H1 (cell line): ENCODE measurements at regions of chr11 and their contacts with region 1.

Region 1: DNA sequence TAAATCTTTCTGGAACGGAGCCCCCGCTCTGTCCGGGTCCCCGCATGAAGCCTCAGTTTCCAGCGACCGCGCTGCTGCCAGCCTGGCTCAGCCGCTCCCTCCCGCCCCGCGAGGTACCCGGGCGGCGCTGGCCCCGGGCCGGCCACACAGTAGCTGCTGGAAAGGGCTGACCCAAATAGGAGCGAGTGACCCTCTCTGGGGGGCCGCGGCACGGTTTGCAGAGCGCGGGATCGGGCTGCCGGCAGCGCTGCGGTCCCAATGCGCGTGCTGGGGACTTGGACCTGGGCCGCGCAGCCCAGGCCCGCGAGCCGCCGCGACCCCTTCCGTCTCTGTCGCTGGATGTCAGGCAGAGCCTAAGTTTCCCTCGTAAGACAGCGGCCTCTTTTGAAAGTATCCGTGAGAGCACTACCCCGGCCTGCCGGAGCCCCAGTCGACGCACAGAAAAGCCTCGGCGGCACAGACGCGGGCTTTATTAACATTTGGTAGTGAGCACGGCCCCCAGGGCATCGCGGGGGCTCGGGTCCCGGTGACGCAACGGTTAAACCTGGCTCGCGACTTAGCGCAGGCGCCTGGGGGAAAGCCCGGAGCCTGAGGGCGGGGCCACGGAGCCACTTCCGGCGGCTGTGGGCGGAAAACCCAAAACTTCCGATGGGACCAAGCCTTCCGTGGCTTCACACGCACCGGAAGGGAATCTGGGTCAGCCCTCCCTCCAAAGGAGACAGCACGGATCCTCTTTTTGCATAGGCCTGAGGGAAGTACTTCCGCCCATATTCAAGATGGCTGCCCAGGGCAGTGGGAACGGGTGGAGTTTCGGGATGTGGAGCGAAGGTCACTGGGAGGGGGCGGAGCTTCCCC is 14.9 kb downstream of the BAD start:
- DNase-seq: peak; percentile 95 to 98
- H3K4me3 ChIP-seq: peak overlapping the region; percentile 70 to 84 (median 82)
- H3K27ac ChIP-seq: peak overlapping the region; percentile 88
- H3K4me1 ChIP-seq: peaks cover 0 to 11% (median 5%) of the 10 kb centered on the region in 4 experiments; a peak in 5 of 7 replicates
- H3K27me3 ChIP-seq: no peaks in the 10 kb centered on the region
- CTCF ChIP-seq: no peak; a peak in 2 of 4 replicates
- EP300 ChIP-seq: 0 out of 3 replicates have a peak, but pooled peaks of 1 of the 2 experiments have one; percentile 27
- POLR2A ChIP-seq: no peak; a peak in 1 of 3 replicates
- RAD21 ChIP-seq: peak in 1 of 2 experiments; percentile 8; a peak in 1 of 4 replicates

Region 2: DNA sequence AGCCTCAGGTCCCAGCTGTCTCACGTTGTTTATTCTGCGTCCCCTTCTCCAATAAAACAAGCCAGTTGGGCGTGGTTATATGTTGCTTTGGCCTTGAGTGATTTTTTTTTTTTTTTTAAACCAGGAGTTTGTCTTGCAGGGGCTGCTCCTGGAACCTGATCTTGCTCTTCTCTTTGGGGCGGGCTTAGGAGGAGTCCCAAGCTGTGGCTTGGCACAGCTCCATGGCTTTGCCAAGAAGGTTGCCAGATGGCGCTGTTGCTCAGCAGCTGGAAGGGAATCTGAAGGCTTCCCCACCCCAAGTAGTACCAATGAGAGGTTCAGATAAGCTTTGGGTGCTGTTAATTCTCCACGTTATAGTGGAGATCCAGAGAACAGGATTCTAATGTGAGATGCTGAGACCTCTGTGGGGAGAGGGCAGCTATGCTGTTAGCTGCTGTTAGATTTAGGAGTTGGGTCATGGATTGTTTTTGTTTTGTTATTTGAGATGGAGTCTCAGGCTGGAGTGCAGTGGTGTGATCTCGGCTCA is 65.1 kb before region 1 on chr11:
- CTCF ChIA-PET with region 1: interaction called, 13 read pairs
- POLR2A ChIA-PET with region 1: interaction called, 39 read pairs
- DNase-seq: peak; percentile 53 to 80
- H3K4me3 ChIP-seq: no peak overlapping the region
- H3K27ac ChIP-seq: no peak overlapping the region
- H3K4me1 ChIP-seq: peaks cover 0 to 5% (median 0%) of the 10 kb centered on the region in 4 experiments; a peak in 3 of 7 replicates
- H3K27me3 ChIP-seq: no peaks in the 10 kb centered on the region; a peak in 1 of 7 replicates
- CTCF ChIP-seq: peak; percentile 79 to 90 (median 81)
- EP300 ChIP-seq: no peak
- POLR2A ChIP-seq: no peak
- RAD21 ChIP-seq: peak; percentile 80 to 88

Region 3: DNA sequence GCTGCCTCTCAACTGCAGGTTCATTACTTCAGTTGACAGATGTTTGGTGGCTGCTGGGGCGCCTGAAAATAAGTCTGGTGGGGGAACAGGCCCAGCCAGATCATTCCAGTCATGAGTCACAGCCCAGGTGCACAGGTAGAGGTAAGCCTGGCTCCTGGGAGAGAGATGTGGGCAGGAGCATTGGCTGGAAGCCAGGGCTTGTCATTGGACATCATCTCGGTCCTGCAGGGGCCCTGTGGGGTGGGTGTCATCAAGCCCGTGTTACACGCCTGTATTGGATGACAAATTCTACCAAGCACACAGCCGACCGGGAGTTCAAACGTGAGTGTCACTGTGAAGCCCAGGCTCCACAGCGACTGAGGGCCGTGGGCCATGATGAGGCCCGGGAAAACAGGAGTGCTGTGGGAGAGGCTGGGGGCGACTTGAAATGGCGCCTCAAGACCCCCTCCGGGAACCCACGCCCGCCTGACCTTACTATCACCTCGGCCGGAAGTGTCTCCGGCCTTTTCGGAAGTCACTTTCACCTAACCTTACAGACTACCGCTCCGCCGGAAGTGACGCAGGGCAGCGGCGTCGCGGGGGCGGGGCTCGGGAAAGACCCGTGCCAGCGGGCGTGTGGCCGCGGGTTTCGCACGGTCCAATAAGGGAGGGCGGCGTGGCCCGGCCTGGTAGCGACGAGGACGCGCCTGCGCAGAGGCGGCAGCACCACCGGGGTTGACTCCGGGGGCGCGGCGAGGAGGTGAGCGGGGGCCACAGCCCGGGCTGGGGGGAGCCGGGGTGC is 29.0 kb before region 1 on chr11 and contains the start of gene FKBP2:
- CTCF ChIA-PET with region 1: interaction called, 102 read pairs
- POLR2A ChIA-PET with region 1: interaction called, 352 read pairs
- DNase-seq: peak; percentile 88 to 97
- H3K4me3 ChIP-seq: peak within 1 kb of the TSS; percentile 67 to 82 (median 78)
- H3K27ac ChIP-seq: peak within 1 kb of the TSS; percentile 87
- H3K4me1 ChIP-seq: peaks cover 0 to 16% (median 12%) of the 10 kb centered on the region in 4 experiments; a peak in 6 of 7 replicates
- H3K27me3 ChIP-seq: no peaks in the 10 kb centered on the region; a peak in 2 of 7 replicates
- CTCF ChIP-seq: no peak; a peak in 1 of 4 replicates
- EP300 ChIP-seq: no peak
- POLR2A ChIP-seq: peak in 1 of 2 experiments; percentile 81; a peak in 2 of 3 replicates
- RAD21 ChIP-seq: no peak
- total RNA-seq, gene FKBP2: 41.7 and 43.2 TPM in 2 replicates

Region 4: DNA sequence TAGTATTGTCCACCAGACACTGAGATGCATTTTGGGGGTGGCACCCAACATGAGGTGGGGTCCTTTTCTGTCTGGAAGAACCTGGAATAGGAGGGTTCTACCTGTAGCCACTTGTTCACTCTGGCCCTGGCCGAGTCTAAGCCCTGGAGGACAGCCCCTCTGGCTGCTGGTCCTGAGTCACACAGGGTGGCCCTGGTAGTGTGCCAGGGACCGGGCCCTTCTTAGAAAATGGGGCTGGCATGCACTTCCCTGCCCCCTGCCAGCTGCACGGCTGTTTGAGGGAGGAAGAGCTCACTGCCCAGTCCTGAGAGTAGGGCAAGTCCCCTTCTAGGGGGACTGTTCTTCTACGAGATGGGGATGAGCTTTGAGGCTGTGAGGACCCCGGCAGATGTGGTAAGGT is 16.1 kb before region 1 on chr11:
- CTCF ChIA-PET with region 1: interaction called, 102 read pairs
- POLR2A ChIA-PET with region 1: interaction called, 352 read pairs
- DNase-seq: no peak
- H3K4me3 ChIP-seq: no peak overlapping the region; a peak in 1 of 8 replicates
- H3K27ac ChIP-seq: no peak overlapping the region
- H3K4me1 ChIP-seq: peaks cover 0 to 31% (median 26%) of the 10 kb centered on the region in 4 experiments; a peak in 6 of 7 replicates
- H3K27me3 ChIP-seq: no peaks in the 10 kb centered on the region
- CTCF ChIP-seq: no peak
- EP300 ChIP-seq: no peak
- POLR2A ChIP-seq: no peak
- RAD21 ChIP-seq: no peak

Region 5: DNA sequence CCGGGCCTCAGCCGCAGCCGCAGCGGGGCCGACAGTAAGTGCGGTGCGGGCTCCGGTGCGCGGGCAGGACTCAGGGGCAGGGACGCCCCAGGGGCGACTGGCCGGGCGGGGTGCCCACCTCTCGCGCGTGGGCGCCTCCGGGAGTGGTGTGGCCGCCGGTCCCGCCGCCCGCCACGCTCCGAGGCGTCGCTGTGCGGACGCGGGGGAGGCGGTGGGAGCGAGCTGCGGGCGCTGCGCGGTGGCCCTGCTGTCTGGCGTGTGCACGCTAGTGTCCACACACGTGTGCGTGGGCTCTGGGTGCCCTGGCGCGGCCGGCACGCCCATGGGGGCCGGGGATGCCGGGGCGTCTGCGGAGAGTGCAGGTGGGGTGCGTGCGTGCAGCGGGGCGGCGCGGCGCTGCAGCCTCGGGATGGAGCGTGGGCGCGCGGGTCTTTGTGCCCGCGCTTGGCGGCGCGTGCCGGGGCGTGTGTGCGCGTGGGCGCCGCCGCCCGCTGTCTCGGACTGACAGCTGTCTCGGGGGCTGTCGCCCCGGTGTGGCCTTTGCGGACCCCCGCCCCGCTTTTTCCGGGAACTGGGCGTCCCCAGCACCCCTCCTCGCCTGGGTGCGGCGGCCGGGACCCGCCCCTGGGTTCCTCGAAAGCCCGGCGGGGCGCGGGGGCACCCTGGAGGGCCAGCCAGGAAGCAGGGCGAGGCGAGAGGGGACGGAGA is 22.3 kb after region 1 on chr11:
- CTCF ChIA-PET with region 1: interaction called, 10 read pairs
- POLR2A ChIA-PET with region 1: interaction called, 79 read pairs
- DNase-seq: no peak
- H3K4me3 ChIP-seq: peak overlapping the region; percentile 21 to 64 (median 34)
- H3K27ac ChIP-seq: no peak overlapping the region
- H3K4me1 ChIP-seq: peaks cover 0 to 14% (median 3%) of the 10 kb centered on the region in 4 experiments; a peak in 5 of 7 replicates
- H3K27me3 ChIP-seq: peaks cover 64 to 79% (median 74%) of the 10 kb centered on the region in 4 experiments
- CTCF ChIP-seq: no peak
- EP300 ChIP-seq: no peak
- POLR2A ChIP-seq: no peak
- RAD21 ChIP-seq: no peak

Region 6: DNA sequence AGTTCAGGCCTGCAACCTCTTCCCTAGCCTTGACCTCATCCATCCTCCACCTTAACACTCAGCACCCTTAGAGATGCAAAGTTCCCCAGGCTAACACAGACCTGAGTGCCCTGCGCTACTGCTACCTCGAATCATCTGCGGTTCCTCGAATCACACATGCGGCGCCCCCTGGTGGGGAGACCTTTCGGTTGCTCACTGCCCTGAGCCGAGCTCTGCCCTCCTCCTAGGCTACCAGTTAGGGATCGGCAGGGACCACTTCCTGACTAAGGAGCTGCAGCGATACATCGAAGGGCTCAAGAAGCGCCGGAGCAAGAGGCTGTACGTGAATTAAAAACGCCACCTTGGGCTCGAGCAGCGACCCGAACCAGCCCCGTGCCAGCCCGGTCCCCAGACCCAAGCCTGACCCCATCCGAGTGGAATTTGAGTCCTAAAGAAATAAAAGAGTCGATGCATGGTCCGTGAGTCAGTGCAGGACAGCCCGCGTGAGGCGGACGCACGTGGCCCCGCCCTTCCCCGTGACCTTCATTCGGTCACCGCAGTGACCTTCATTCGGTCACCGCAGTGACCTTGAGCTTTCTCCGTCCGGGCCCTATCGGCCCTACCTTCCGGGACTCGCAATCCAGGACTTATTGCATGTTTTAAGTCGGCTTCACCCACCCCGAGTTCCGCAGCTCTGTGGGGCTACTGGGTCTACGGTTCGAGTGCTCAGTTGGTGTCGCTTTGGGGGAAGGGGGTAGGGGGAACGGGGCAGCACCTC is 34.9 kb after region 1 on chr11:
- CTCF ChIA-PET with region 1: interaction called, 168 read pairs
- POLR2A ChIA-PET with region 1: interaction called, 57 read pairs
- DNase-seq: peak; percentile 86 to 99
- H3K4me3 ChIP-seq: peak overlapping the region; percentile 48 to 71 (median 58)
- H3K27ac ChIP-seq: peak overlapping the region; percentile 87
- H3K4me1 ChIP-seq: peaks cover 3 to 21% (median 18%) of the 10 kb centered on the region in 4 experiments; a peak in 6 of 7 replicates
- H3K27me3 ChIP-seq: peaks cover 13 to 30% (median 18%) of the 10 kb centered on the region in 4 experiments
- CTCF ChIP-seq: peak in 2 of 3 experiments; percentile 83 to 95; a peak in 3 of 4 replicates
- EP300 ChIP-seq: no peak
- POLR2A ChIP-seq: peak in 1 of 2 experiments; percentile 95; a peak in 2 of 3 replicates
- RAD21 ChIP-seq: peak; percentile 54 to 69

Region 7: GRCh38 chr11:64358907-64359711 is 89.5 kb after region 1 on chr11 and contains the start of gene RPS6KA4:
- CTCF ChIA-PET with region 1: interaction called, 34 read pairs
- POLR2A ChIA-PET with region 1: interaction called, 7 read pairs
- DNase-seq: peak in 1 of 2 experiments; percentile 75
- H3K4me3 ChIP-seq: peak within 1 kb of the TSS; percentile 61 to 83 (median 72)
- H3K27ac ChIP-seq: no peak within 1 kb of the TSS; the same call in 1 of the 2 replicates
- H3K4me1 ChIP-seq: peaks cover 0 to 39% (median 30%) of the 10 kb centered on the region in 4 experiments; a peak in 6 of 7 replicates
- H3K27me3 ChIP-seq: no peaks in the 10 kb centered on the region
- CTCF ChIP-seq: no peak
- EP300 ChIP-seq: no peak
- POLR2A ChIP-seq: no peak
- RAD21 ChIP-seq: no peak
- total RNA-seq, gene RPS6KA4: 12.6 and 13.2 TPM in 2 replicates

Region 8: DNA sequence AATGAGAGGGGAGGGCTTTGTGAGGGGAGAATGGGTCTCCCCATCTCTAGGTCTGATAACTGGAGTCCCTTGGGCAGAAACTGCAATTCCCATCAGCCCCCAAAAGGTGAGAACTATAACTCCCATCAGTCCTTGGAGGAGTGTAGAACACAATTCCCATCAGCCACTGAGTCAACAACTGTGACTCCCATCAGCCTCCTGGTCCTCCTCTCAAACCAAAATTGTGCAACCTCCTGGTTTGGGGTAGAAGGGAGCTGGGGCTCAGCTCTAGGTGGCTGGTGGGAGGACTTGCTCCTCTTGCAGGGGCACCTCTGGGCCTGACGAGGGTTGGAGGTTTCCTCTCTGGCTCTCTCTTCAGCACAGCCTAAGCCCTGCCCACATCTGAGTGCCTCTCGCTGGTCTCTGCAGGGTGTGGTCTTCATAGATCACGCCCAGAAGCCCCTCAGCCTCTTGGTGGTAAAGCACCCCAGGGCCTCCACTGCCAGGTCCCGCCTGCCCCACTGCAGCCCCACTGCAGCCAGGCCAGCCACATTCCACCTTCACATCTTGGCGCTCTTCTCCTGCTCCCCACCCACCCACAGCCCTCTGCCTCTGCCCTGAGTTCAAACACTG is 339.9 kb after region 1 on chr11:
- CTCF ChIA-PET with region 1: no interaction called
- POLR2A ChIA-PET with region 1: no interaction called
- DNase-seq: no peak
- H3K4me3 ChIP-seq: no peak overlapping the region
- H3K27ac ChIP-seq: no peak overlapping the region
- H3K4me1 ChIP-seq: peaks cover 0 to 6% (median 0%) of the 10 kb centered on the region in 4 experiments; a peak in 1 of 7 replicates
- H3K27me3 ChIP-seq: no peaks in the 10 kb centered on the region; a peak in 2 of 7 replicates
- CTCF ChIP-seq: no peak
- EP300 ChIP-seq: no peak
- POLR2A ChIP-seq: no peak
- RAD21 ChIP-seq: no peak